Left ventricle myocardium superior (tissue), 1 donor: ENCODE measurements at regions of chr4 and their contacts with region 1.

Region 1: DNA sequence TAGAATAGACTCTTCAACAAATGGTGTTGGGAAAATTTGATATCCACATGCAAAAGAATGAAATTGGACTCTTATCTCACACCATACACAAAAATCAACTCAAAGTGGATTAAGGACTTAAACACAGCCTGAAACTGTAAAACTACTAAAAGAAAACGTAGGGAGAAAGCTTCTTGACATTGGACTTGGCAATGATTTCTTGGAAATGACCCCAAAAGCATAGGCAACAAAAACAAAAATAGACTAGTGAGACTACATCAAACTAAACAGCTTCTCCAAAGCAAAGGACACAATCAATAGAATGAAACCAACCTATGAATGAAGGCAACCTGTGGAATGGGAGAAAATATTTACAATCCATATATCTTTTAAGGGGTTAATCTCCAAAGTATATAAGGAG is 94.7 kb upstream of the INTU start:
- DNase-seq: no peak
- ATAC-seq: no peak

Region 2: DNA sequence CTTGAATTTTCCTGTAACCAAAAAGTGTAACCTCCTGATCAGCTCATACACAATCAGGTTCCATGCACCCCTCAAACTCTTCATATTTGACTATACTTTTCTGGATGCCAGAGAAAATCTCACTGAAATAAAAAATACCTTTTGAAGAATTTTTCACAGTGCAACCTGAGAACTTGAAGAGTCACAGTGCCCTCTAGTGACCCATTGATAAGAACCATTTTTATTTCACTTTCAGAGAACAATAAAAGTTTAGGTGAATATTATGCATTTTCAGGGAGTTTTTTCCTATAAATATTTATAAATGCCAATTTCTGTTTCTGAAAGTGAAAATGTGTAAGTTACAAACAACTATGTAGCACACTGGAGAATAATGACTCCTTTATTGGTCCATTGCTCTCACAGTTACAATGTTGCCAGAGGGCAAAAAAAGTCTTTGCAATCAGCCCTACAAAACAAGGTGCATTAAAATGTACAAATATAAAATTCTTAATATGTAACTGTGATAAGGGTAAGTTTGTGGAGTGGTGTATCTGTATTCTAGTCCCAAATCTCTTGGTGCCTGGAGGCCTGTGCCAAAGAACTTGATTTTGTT is 58.9 kb before region 1 on chr4:
- intact Hi-C with region 1: loop called (anchors 5 kb)
- DNase-seq: no peak
- ATAC-seq: no peak